ENCODE measurements at regions of chr15 and their contacts with region 1.

Region 1: GRCh38 chr15:91706322-91707032 is 147.0 kb upstream of the SLCO3A1 start:
- DNase-seq: peak; percentile 92
- ATAC-seq: peak; percentile 99
- H3K4me3 Mint-ChIP-seq: no peak overlapping the region
- H3K27ac Mint-ChIP-seq: peak overlapping the region; percentile 69
- H3K4me1 Mint-ChIP-seq: peaks cover 15% of the 10 kb centered on the region
- H3K27me3 Mint-ChIP-seq: peaks cover 5% of the 10 kb centered on the region
- CTCF ChIP-seq: peak; percentile 85

Region 2: GRCh38 chr15:91302588-91303439 is 403.7 kb before region 1 on chr15:
- CTCF ChIA-PET with region 1: interaction called, 15 read pairs
- POLR2A ChIA-PET with region 1: no interaction called
- intact Hi-C with region 1: loop called (anchors 10 kb)
- DNase-seq: no peak
- ATAC-seq: peak; percentile 49
- H3K4me3 Mint-ChIP-seq: no peak overlapping the region
- H3K27ac Mint-ChIP-seq: no peak overlapping the region
- H3K4me1 Mint-ChIP-seq: peaks cover 3% of the 10 kb centered on the region
- H3K27me3 Mint-ChIP-seq: peaks cover 10% of the 10 kb centered on the region
- CTCF ChIP-seq: peak; percentile 87

Region 3: GRCh38 chr15:91694831-91695210 is 11.7 kb before region 1 on chr15:
- CTCF ChIA-PET with region 1: interaction called, 37 read pairs
- POLR2A ChIA-PET with region 1: no interaction called
- intact Hi-C with region 1: no loop called
- DNase-seq: no peak
- ATAC-seq: no peak
- H3K4me3 Mint-ChIP-seq: no peak overlapping the region
- H3K27ac Mint-ChIP-seq: no peak overlapping the region
- H3K4me1 Mint-ChIP-seq: no peaks in the 10 kb centered on the region
- H3K27me3 Mint-ChIP-seq: no peaks in the 10 kb centered on the region
- CTCF ChIP-seq: no peak

Region 4: DNA sequence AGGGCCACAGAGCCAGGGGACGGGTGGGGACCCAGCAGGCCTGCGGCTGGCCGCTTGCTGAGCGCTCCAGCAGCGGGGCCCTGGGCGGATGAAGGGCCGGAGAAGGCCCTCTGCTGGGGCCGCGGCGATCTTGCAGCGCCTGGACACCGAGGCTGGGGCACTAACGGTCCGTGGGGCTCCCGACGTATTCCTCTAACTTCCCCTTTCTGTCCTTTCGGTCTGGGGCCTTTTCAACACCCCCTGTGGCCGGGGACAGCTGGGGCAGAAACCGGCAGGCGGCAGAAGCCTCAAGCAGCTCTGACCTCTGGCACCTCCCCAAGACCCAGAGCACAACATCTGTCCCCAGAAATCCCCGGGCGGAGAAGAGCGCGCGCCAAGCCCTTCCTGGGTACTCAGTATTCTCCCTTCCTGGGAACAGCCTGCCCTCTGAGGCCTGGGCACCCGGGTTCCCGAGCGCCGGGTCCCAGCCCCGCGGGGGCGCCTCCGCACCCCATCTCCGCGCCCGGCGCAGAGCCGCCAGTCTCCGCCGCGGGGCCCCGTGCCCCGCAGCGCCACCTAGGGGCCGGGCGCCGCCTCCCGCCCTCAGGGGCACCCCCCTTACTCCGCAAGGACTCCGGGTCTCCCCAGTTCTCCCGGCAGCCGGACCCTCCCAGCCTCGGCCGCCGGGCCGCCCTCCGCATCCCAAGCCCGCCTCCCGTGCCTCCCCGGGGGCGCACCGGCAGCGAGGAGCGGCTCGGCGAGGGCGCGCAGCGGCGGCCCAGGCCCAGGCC is 146.4 kb after region 1 on chr15:
- CTCF ChIA-PET with region 1: interaction called, 17 read pairs
- POLR2A ChIA-PET with region 1: interaction called, 3 read pairs
- intact Hi-C with region 1: loop called (anchors 10 kb)
- DNase-seq: peak; percentile 65
- ATAC-seq: peak; percentile 65
- H3K4me3 Mint-ChIP-seq: peak overlapping the region; percentile 75
- H3K27ac Mint-ChIP-seq: peak overlapping the region; percentile 69
- H3K4me1 Mint-ChIP-seq: peaks cover 57% of the 10 kb centered on the region
- H3K27me3 Mint-ChIP-seq: peaks cover 3% of the 10 kb centered on the region
- CTCF ChIP-seq: peak; percentile 82

Region 5: GRCh38 chr15:92077353-92078085 is 371.0 kb after region 1 on chr15:
- CTCF ChIA-PET with region 1: interaction called, 36 read pairs
- POLR2A ChIA-PET with region 1: no interaction called
- intact Hi-C with region 1: loop called (anchors 5 kb)
- DNase-seq: peak; percentile 84
- ATAC-seq: peak; percentile 85
- H3K4me3 Mint-ChIP-seq: no peak overlapping the region
- H3K27ac Mint-ChIP-seq: no peak overlapping the region
- H3K4me1 Mint-ChIP-seq: peaks cover 14% of the 10 kb centered on the region
- H3K27me3 Mint-ChIP-seq: no peaks in the 10 kb centered on the region
- CTCF ChIP-seq: peak; percentile 67